ENCODE measurements at regions of chr7 and their contacts with region 1.

Region 1: GRCh38 chr7:22854158-22855048 is 31.8 kb upstream of the TOMM7 start:
- DNase-seq: peak; percentile 86 to 98
- H3K4me3 ChIP-seq: peak overlapping the region; percentile 78
- CTCF ChIP-seq: no peak
- POLR2A ChIP-seq: no peak

Region 2: GRCh38 chr7:22375359-22376048 is 478.9 kb before region 1 on chr7:
- intact Hi-C with region 1: no loop called
- DNase-seq: no peak
- H3K4me3 ChIP-seq: no peak overlapping the region
- CTCF ChIP-seq: no peak
- POLR2A ChIP-seq: no peak

Region 3: GRCh38 chr7:22990588-22990949 is 136.2 kb after region 1 on chr7:
- intact Hi-C with region 1: no loop called
- DNase-seq: no peak
- H3K4me3 ChIP-seq: no peak overlapping the region
- CTCF ChIP-seq: no peak
- POLR2A ChIP-seq: no peak

Region 4: GRCh38 chr7:23043441-23043840 is 189.0 kb after region 1 on chr7:
- intact Hi-C with region 1: loop called (anchors 10 kb)
- DNase-seq: no peak
- H3K4me3 ChIP-seq: no peak overlapping the region
- CTCF ChIP-seq: no peak
- POLR2A ChIP-seq: no peak